Calu3 (cell line): ENCODE measurements at regions of chr6 and their contacts with region 1.

Region 1: DNA sequence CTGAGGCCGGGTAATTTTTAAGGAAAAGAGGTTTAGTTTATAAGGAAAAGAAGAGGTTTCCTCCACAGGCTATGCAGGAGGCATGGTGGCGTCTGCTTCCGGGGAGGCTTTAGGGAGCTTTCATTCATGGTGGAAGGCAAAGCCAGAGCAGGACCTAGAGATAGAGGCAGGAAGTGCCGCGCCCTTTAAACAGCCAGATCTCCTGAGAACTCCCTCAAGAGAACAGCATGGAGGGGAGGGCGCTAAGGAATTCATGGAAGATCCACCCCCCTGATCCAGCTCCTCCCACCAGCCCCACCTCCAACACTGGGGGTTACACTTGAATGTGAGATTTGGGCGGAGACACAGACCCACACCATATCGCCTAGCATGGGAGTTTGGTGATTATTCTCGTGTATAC is 13.9 kb upstream of the DACT2 start:
- DNase-seq: no peak
- H3K4me3 Mint-ChIP-seq: no peak overlapping the region
- H3K27ac Mint-ChIP-seq: no peak overlapping the region
- H3K4me1 Mint-ChIP-seq: peaks cover 14% of the 10 kb centered on the region
- H3K27me3 Mint-ChIP-seq: peaks cover 23% of the 10 kb centered on the region
- CTCF ChIP-seq: no peak

Region 2: GRCh38 chr6:168318067-168318466 is 15.4 kb before region 1 on chr6:
- CTCF ChIA-PET with region 1: interaction called, 10 read pairs
- intact Hi-C with region 1: no loop called
- DNase-seq: no peak
- H3K4me3 Mint-ChIP-seq: no peak overlapping the region
- H3K27ac Mint-ChIP-seq: no peak overlapping the region
- H3K4me1 Mint-ChIP-seq: peaks cover 12% of the 10 kb centered on the region
- H3K27me3 Mint-ChIP-seq: peaks cover 57% of the 10 kb centered on the region
- CTCF ChIP-seq: no peak